K562 (cell line): ENCODE measurements at regions of chr19 and their contacts with region 1.

Region 1: GRCh38 chr19:48190288-48190884 is 19.9 kb downstream of the ZSWIM9 start:
- DNase-seq: peak; percentile 84 to 94 (median 92)
- ATAC-seq: peak; percentile 97
- H3K4me3 ChIP-seq: no peak overlapping the region
- H3K27ac ChIP-seq: no peak overlapping the region
- H3K4me1 ChIP-seq: peaks cover 8 to 17% of the 10 kb centered on the region in 2 experiments; a peak in 4 of 5 replicates
- H3K27me3 ChIP-seq: no peaks in the 10 kb centered on the region
- CTCF ChIP-seq: peak; percentile 50 to 60 (median 57)
- EP300 ChIP-seq: no peak
- POLR2A ChIP-seq: no peak
- RAD21 ChIP-seq: no peak; a peak in 1 of 4 replicates

Region 2: GRCh38 chr19:48158210-48158790 is 32.1 kb before region 1 on chr19:
- CTCF ChIA-PET with region 1: no interaction called
- POLR2A ChIA-PET with region 1: no interaction called
- in situ Hi-C with region 1: no loop called
- intact Hi-C with region 1: no loop called
- DNase-seq: no peak
- ATAC-seq: no peak
- H3K4me3 ChIP-seq: no peak overlapping the region
- H3K27ac ChIP-seq: no peak overlapping the region
- H3K4me1 ChIP-seq: no peaks in the 10 kb centered on the region; a peak in 1 of 5 replicates
- H3K27me3 ChIP-seq: no peaks in the 10 kb centered on the region
- CTCF ChIP-seq: no peak
- EP300 ChIP-seq: no peak
- POLR2A ChIP-seq: no peak
- RAD21 ChIP-seq: no peak

Region 3: GRCh38 chr19:48203732-48204628 is 13.6 kb after region 1 on chr19:
- CTCF ChIA-PET with region 1: no interaction called
- POLR2A ChIA-PET with region 1: interaction called, 24 read pairs
- in situ Hi-C with region 1: no loop called
- intact Hi-C with region 1: no loop called
- DNase-seq: peak; percentile 93 to 98 (median 96)
- ATAC-seq: peak; percentile 100
- H3K4me3 ChIP-seq: peak overlapping the region; percentile 55
- H3K27ac ChIP-seq: peak overlapping the region; percentile 75
- H3K4me1 ChIP-seq: peaks cover 8 to 17% of the 10 kb centered on the region in 2 experiments; a peak in 3 of 5 replicates
- H3K27me3 ChIP-seq: no peaks in the 10 kb centered on the region
- CTCF ChIP-seq: no peak
- EP300 ChIP-seq: no peak
- POLR2A ChIP-seq: peak; percentile 84
- RAD21 ChIP-seq: peak in 1 of 2 experiments; percentile 4; a peak in 1 of 4 replicates

Region 4: DNA sequence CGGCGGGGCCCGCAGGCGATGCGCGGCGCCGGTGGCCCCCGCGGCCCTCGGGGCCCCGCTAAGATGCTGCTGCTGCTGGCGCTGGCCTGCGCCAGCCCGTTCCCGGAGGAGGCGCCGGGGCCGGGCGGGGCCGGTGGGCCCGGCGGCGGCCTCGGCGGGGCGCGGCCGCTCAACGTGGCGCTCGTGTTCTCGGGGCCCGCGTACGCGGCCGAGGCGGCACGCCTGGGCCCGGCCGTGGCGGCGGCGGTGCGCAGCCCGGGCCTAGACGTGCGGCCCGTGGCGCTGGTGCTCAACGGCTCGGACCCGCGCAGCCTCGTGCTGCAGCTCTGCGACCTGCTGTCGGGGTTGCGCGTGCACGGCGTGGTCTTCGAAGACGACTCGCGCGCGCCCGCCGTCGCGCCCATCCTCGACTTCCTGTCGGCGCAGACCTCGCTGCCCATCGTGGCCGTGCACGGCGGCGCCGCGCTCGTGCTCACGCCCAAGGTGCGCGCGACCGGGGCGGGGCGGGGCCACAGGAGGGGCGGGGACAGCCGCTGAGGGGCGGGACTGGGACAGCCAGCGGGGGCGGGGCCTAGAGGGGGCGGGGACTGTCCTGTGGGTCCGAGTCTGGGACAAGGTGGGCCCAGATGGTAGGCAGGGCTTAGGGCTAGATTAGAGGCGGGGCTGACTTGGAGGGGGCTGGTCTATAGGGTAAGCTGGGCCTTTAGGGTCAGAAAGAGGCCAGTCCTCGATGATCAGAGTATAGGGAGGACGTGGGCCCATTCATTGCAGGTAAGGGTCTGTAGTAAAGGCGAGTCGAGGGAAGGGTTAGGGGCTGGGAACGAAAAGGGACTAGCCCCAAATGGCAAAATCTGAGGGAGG is 208.2 kb after region 1 on chr19:
- CTCF ChIA-PET with region 1: no interaction called
- POLR2A ChIA-PET with region 1: no interaction called
- in situ Hi-C with region 1: no loop called
- intact Hi-C with region 1: no loop called
- DNase-seq: peak; percentile 94 to 98 (median 96)
- ATAC-seq: peak; percentile 89
- H3K4me3 ChIP-seq: peak overlapping the region; percentile 75
- H3K27ac ChIP-seq: peak overlapping the region; percentile 85
- H3K4me1 ChIP-seq: peaks cover 41 to 68% of the 10 kb centered on the region in 2 experiments
- H3K27me3 ChIP-seq: no peaks in the 10 kb centered on the region
- CTCF ChIP-seq: no peak
- EP300 ChIP-seq: no peak
- POLR2A ChIP-seq: peak; percentile 98
- RAD21 ChIP-seq: no peak